Psoas muscle (tissue), 8 donors: ENCODE measurements at regions of chr21 and their contacts with region 1.

Region 1: GRCh38 chr21:36589355-36589971 is 109.5 kb upstream of the SIM2 start:
- DNase-seq: peak; percentile 45 to 72
- ATAC-seq: peak; percentile 44 to 81 (median 74)
- H3K4me3 ChIP-seq: no peak overlapping the region
- H3K27ac ChIP-seq: no peak overlapping the region
- H3K4me1 ChIP-seq: no peaks in the 10 kb centered on the region
- H3K27me3 ChIP-seq: peaks cover 0 to 2% (median 0%) of the 10 kb centered on the region in 3 donors
- CTCF ChIP-seq: peak; percentile 50

Region 2: GRCh38 chr21:35540950-35541638 is 1048.4 kb before region 1 on chr21:
- intact Hi-C with region 1: no loop called
- DNase-seq: no peak
- ATAC-seq: no peak
- H3K4me3 ChIP-seq: no peak overlapping the region
- H3K27ac ChIP-seq: no peak overlapping the region
- H3K4me1 ChIP-seq: no peaks in the 10 kb centered on the region
- H3K27me3 ChIP-seq: peaks cover 0 to 3% (median 0%) of the 10 kb centered on the region in 3 donors
- CTCF ChIP-seq: no peak

Region 3: GRCh38 chr21:35738347-35738961 is 851.0 kb before region 1 on chr21:
- intact Hi-C with region 1: loop called in 1 of 2 experiments (anchors 5 kb)
- DNase-seq: no peak
- ATAC-seq: peak; percentile 30 to 77 (median 41)
- H3K4me3 ChIP-seq: no peak overlapping the region
- H3K27ac ChIP-seq: no peak overlapping the region
- H3K4me1 ChIP-seq: no peaks in the 10 kb centered on the region
- H3K27me3 ChIP-seq: no peaks in the 10 kb centered on the region
- CTCF ChIP-seq: no peak

Region 4: DNA sequence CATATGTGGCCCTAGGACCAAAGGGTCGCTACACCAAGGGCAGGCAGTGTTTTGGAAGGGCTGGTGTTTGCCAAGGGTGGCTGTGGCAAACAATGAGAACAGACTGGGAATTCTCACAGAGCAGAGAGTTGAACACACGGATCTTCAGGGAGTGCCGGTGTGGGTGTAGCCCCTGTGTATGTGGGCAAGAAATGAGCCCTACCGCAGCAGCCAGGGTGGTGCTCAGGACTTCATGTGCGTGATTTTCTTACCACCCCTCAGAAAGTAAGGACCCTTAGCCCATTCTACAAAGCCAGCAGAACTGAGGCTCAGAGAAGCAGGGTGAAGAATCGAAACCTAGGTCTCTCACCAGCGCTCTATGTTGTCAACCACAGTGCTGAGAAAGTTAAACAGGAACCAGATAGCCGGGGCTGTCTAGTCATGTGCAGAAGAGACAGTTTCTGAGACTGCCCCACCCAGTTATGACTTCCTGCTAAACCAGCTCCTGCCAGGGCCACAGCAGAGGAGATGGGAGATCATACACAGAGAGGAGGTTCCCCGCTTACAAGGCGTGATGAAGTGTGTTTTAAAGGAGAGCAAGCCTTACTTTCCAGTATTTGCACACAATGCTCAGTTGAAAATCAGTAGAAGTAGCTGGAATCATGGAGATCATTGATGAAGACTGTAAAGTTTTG is 291.4 kb before region 1 on chr21:
- intact Hi-C with region 1: no loop called
- DNase-seq: peak in 1 of 2 donors; percentile 39
- ATAC-seq: peak in 2 of 4 donors; percentile 50 to 66
- H3K4me3 ChIP-seq: no peak overlapping the region
- H3K27ac ChIP-seq: no peak overlapping the region
- H3K4me1 ChIP-seq: no peaks in the 10 kb centered on the region
- H3K27me3 ChIP-seq: no peaks in the 10 kb centered on the region
- CTCF ChIP-seq: no peak

Region 5: GRCh38 chr21:36419996-36420395 is 169.5 kb before region 1 on chr21:
- intact Hi-C with region 1: loop called (anchors 2 to 5 kb)
- DNase-seq: peak; percentile 84 to 89
- ATAC-seq: peak; percentile 88 to 95 (median 92)
- H3K4me3 ChIP-seq: no peak overlapping the region
- H3K27ac ChIP-seq: no peak overlapping the region
- H3K4me1 ChIP-seq: no peaks in the 10 kb centered on the region
- H3K27me3 ChIP-seq: no peaks in the 10 kb centered on the region
- CTCF ChIP-seq: peak; percentile 87

Region 6: GRCh38 chr21:36478207-36478701 is 111.2 kb before region 1 on chr21:
- intact Hi-C with region 1: no loop called
- DNase-seq: no peak
- ATAC-seq: peak in 3 of 4 donors; percentile 17 to 58 (median 40)
- H3K4me3 ChIP-seq: no peak overlapping the region
- H3K27ac ChIP-seq: no peak overlapping the region
- H3K4me1 ChIP-seq: peaks cover 3% of the 10 kb centered on the region
- H3K27me3 ChIP-seq: no peaks in the 10 kb centered on the region
- CTCF ChIP-seq: no peak